Activated CD4-positive, alpha-beta T cell treated with anti-CD3 and anti-CD28 coated beads for 36 hours (primary cell): ENCODE measurements at regions of chr3 and their contacts with region 1.

Region 1: DNA sequence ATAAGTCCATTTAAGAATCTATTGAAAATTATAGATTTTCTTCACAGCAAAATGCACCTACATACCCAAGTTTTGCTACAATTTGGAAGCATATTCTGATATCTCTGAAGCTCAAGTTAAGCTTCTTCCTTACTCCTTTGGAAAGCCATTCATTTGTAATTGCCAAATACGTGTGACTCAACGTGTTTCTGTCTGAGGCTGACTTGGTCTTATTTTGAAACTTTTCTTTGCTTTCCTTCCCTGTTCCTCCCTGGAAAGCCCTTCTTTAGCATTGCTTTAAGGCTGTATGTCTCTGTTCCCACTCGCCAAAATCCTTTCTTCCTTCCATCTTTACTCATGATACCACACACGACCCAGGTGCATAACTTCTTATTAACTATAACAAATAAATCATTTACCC is 232.0 kb downstream of the ZBBX start:
- DNase-seq: no peak
- ATAC-seq: no peak
- H3K4me3 Mint-ChIP-seq: no peak overlapping the region
- H3K27ac Mint-ChIP-seq: no peak overlapping the region
- H3K4me1 Mint-ChIP-seq: no peaks in the 10 kb centered on the region
- H3K27me3 Mint-ChIP-seq: no peaks in the 10 kb centered on the region

Region 2: GRCh38 chr3:166902374-166902773 is 245.8 kb before region 1 on chr3:
- CTCF ChIA-PET with region 1: no interaction called
- POLR2A ChIA-PET with region 1: no interaction called
- intact Hi-C with region 1: no loop called
- DNase-seq: no peak
- ATAC-seq: no peak
- H3K4me3 Mint-ChIP-seq: no peak overlapping the region
- H3K27ac Mint-ChIP-seq: no peak overlapping the region
- H3K4me1 Mint-ChIP-seq: no peaks in the 10 kb centered on the region
- H3K27me3 Mint-ChIP-seq: no peaks in the 10 kb centered on the region

Region 3: GRCh38 chr3:167187221-167187620 is 39.1 kb after region 1 on chr3:
- CTCF ChIA-PET with region 1: no interaction called
- POLR2A ChIA-PET with region 1: no interaction called
- intact Hi-C with region 1: loop called in 1 of 2 experiments (anchors 2 kb)
- DNase-seq: no peak
- ATAC-seq: no peak
- H3K4me3 Mint-ChIP-seq: no peak overlapping the region
- H3K27ac Mint-ChIP-seq: no peak overlapping the region
- H3K4me1 Mint-ChIP-seq: no peaks in the 10 kb centered on the region
- H3K27me3 Mint-ChIP-seq: no peaks in the 10 kb centered on the region